Heart right ventricle (tissue), 16 donors: ENCODE measurements at regions of chr1 and their contacts with region 1.

Region 1: DNA sequence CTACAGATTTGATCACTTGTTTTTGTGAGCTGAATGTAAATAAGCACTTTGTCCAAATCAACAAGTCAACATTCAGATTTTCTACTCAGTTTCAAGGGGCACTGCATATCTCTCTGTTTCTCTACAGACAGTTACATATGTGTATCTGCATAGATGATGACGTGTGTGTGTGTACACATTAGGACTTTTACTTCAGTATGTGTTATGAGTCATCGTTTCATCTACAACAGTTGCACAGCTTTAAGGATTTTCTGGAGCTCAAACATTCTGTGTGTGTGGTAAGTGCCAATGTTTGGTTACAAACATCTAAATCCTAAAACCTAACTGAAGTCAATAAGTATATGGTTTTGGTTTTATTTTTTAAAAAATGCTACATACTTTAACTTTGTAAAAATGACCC is 494.5 kb upstream of the PBX1 start:
- DNase-seq: no peak
- ATAC-seq: no peak
- H3K4me3 ChIP-seq: no peak overlapping the region
- H3K27ac ChIP-seq: no peak overlapping the region
- H3K4me1 ChIP-seq: peaks cover 0 to 4% (median 0%) of the 10 kb centered on the region in 9 donors
- H3K27me3 ChIP-seq: no peaks in the 10 kb centered on the region
- CTCF ChIP-seq: no peak

Region 2: GRCh38 chr1:163970699-163971098 is 93.8 kb before region 1 on chr1:
- intact Hi-C with region 1: loop called in 1 of 10 experiments (anchors 10 kb)
- DNase-seq: no peak
- ATAC-seq: no peak
- H3K4me3 ChIP-seq: no peak overlapping the region
- H3K27ac ChIP-seq: no peak overlapping the region
- H3K4me1 ChIP-seq: no peaks in the 10 kb centered on the region
- H3K27me3 ChIP-seq: no peaks in the 10 kb centered on the region
- CTCF ChIP-seq: no peak